Body of pancreas (tissue), 4 donors: ENCODE measurements at regions of chr10 and their contacts with region 1.

Region 1: DNA sequence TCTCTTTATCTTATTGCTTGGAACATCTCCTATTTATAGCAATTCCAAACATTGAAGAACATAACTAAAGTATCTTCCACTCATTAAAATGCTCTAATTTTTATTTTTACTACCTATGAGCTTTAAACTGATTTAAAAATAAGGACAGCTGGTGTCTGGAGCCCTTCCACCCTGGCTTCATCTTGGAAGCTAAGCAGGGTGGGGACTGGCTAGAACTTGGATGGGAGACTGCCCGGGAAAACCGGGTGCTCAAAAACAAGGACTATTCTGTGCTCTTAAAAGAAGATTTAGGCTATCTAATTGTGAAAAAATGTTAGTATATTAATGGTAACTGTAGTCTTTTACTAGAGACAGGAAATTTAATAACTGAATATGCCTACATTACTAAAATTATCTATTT is 69.2 kb downstream of the ARMC3 start:
- DNase-seq: no peak
- ATAC-seq: no peak
- H3K4me3 ChIP-seq: no peak overlapping the region
- H3K27ac ChIP-seq: no peak overlapping the region
- H3K4me1 ChIP-seq: peaks cover 12% of the 10 kb centered on the region
- H3K27me3 ChIP-seq: no peaks in the 10 kb centered on the region
- CTCF ChIP-seq: no peak
- POLR2A ChIP-seq: no peak

Region 2: GRCh38 chr10:21989453-21990154 is 1007.5 kb before region 1 on chr10:
- intact Hi-C with region 1: loop called (anchors 10 kb)
- DNase-seq: peak; percentile 37 to 69 (median 57)
- ATAC-seq: peak; percentile 74
- H3K4me3 ChIP-seq: no peak overlapping the region
- H3K27ac ChIP-seq: peak overlapping the region in 1 of 4 donors; percentile 20
- H3K4me1 ChIP-seq: peaks cover 5% of the 10 kb centered on the region
- H3K27me3 ChIP-seq: no peaks in the 10 kb centered on the region
- CTCF ChIP-seq: peak; percentile 27 to 56 (median 52)
- POLR2A ChIP-seq: no peak

Region 3: GRCh38 chr10:22022257-22023032 is 974.7 kb before region 1 on chr10:
- intact Hi-C with region 1: loop called (anchors 10 kb)
- DNase-seq: peak in 1 of 4 donors; percentile 9
- ATAC-seq: peak; percentile 27
- H3K4me3 ChIP-seq: no peak overlapping the region
- H3K27ac ChIP-seq: no peak overlapping the region
- H3K4me1 ChIP-seq: no peaks in the 10 kb centered on the region
- H3K27me3 ChIP-seq: no peaks in the 10 kb centered on the region
- CTCF ChIP-seq: no peak
- POLR2A ChIP-seq: no peak